BJ (cell line): ENCODE measurements at regions of chr12 and their contacts with region 1.

Region 1: GRCh38 chr12:49358483-49359141 is 8.7 kb upstream of the SPATS2 start:
- DNase-seq: no peak
- H3K4me3 ChIP-seq: no peak overlapping the region
- H3K27me3 ChIP-seq: no peaks in the 10 kb centered on the region
- CTCF ChIP-seq: peak; percentile 77

Region 2: DNA sequence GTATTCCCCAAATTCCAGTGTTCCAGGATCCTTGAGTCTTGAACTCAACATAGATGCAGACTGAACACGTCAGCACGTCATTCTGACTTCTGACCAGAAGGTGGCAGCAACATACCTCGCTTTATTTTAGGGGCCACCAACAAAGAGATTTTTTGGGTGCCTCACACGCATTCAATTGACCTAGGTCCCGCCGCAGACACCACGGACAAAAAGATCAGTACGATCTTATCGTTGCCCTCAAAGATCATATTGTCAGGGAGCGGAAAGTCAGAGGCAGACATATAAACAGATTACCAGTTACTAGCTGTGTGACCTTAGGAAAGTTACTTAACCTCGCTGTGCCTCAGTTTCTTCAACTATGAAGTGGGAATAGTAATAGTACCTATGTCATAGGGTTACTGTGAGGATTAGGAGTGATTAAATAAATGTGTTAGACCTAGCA is 70.2 kb before region 1 on chr12:
- CTCF ChIA-PET with region 1: interaction called, 37 read pairs
- POLR2A ChIA-PET with region 1: no interaction called
- DNase-seq: no peak
- H3K4me3 ChIP-seq: no peak overlapping the region
- H3K27me3 ChIP-seq: peaks cover 8% of the 10 kb centered on the region
- CTCF ChIP-seq: peak; percentile 82

Region 3: DNA sequence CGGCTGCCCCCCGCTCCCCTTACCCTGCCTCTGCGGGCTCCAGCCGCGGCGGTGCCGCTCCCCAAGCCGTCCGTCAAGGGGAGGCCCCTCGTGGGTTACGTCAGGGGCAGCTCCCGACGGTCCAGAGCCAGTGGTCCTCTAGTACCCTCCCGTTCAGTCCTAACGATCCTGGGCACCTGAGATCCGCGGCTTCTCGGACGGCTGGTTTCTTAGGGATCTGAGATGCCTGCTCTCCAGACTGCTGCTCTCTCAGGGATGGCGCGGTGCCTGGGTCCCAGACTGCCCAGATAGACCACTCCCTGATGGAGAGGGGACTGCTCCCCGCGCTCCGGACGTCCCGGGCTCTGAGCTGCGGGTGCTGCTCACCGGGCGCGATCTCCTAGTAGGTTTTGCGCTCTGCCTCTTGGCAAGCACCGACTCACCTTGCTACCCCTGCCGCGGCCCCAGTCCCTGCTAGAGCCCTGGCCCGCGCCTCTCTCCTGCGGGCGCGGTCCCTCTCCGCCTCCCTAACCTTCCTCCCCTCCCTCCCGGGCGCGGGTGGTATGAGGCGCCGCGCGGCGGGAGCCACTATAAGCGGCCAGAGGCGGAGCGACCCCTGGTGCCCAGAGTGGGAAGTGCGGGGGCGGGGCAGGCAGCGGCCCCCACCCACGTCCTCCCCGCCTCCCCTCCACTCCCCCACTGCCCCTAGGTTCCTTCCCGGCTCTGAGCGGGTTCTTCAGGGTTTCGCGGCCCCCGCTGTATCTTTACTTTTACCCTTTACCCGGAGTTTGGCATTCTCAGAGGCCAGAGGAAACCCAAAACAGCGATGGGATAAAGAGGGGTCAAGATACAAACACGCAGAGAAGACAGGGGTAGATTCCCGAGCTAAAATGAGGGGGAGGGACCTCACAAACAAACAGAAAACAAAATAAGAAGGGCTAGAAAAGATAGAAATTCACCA is 21.7 kb before region 1 on chr12 and contains the start of gene C1QL4:
- CTCF ChIA-PET with region 1: interaction called, 68 read pairs
- POLR2A ChIA-PET with region 1: no interaction called
- DNase-seq: no peak
- H3K4me3 ChIP-seq: peak within 1 kb of the TSS; percentile 22
- H3K27me3 ChIP-seq: peaks cover 33% of the 10 kb centered on the region
- CTCF ChIP-seq: peak; percentile 97
- polyA plus RNA-seq, gene C1QL4: not detected in 2 replicates

Region 4: GRCh38 chr12:49347384-49348237 is 11.0 kb before region 1 on chr12:
- CTCF ChIA-PET with region 1: interaction called, 78 read pairs
- POLR2A ChIA-PET with region 1: no interaction called
- DNase-seq: no peak
- H3K4me3 ChIP-seq: peak overlapping the region; percentile 31
- H3K27me3 ChIP-seq: peaks cover 34% of the 10 kb centered on the region
- CTCF ChIP-seq: peak; percentile 95

Region 5: DNA sequence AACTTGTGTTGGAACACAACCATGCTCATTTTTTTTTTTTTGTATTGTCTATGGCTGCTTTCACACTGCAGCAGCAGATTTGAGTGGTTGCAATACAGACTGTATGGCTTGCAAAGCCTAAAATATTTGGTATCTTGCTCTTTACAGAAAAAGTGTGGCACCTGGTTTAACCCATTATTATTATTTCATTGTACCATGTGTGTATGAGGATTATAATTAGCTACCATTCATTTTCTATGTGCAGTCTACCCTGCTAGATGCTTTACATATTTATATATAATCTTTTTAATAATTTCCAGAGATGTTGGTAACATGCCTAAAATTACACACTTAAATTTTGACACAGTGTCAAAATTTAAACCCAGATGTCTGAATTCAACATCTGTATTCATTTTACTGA is 46.3 kb after region 1 on chr12:
- CTCF ChIA-PET with region 1: no interaction called
- POLR2A ChIA-PET with region 1: no interaction called
- DNase-seq: no peak
- H3K4me3 ChIP-seq: no peak overlapping the region
- H3K27me3 ChIP-seq: no peaks in the 10 kb centered on the region
- CTCF ChIP-seq: no peak

Region 6: DNA sequence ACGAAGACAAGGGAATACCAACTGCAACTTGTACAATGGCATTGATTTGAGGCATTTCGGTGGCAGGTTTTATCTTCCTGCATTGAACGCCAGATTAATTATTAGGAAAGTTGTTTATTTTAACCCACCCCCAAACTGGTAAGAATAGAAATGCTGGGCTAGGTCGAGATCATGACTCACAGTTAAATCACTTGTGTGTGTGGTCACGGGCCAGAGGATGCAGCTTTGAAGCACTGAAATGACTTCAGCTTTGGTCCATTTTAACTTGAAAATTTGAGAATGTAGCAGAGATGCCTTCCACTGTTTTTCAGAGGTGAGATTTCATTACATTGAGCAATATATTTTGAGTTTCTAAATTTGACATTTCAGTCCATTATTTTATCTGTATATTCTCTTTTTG is 156.7 kb after region 1 on chr12:
- CTCF ChIA-PET with region 1: interaction called, 315 read pairs
- POLR2A ChIA-PET with region 1: no interaction called
- DNase-seq: peak; percentile 13
- H3K4me3 ChIP-seq: no peak overlapping the region
- H3K27me3 ChIP-seq: no peaks in the 10 kb centered on the region
- CTCF ChIP-seq: no peak

Region 7: GRCh38 chr12:49580572-49581535 is 222.2 kb after region 1 on chr12:
- CTCF ChIA-PET with region 1: interaction called, 61 read pairs
- POLR2A ChIA-PET with region 1: no interaction called
- DNase-seq: no peak
- H3K4me3 ChIP-seq: no peak overlapping the region
- H3K27me3 ChIP-seq: no peaks in the 10 kb centered on the region
- CTCF ChIP-seq: peak; percentile 95

Region 8: GRCh38 chr12:50201978-50202521 is 843.4 kb after region 1 on chr12:
- CTCF ChIA-PET with region 1: no interaction called
- POLR2A ChIA-PET with region 1: no interaction called
- DNase-seq: peak; percentile 95
- H3K4me3 ChIP-seq: no peak overlapping the region
- H3K27me3 ChIP-seq: no peaks in the 10 kb centered on the region
- CTCF ChIP-seq: no peak